ENCODE measurements at regions of chr14 and their contacts with region 1.

Region 1: GRCh38 chr14:75560962-75561432 is 17.4 kb upstream of the FLVCR2 start:
- DNase-seq: peak; percentile 60
- ATAC-seq: peak; percentile 54
- H3K4me3 Mint-ChIP-seq: no peak overlapping the region
- H3K27ac Mint-ChIP-seq: no peak overlapping the region
- H3K4me1 Mint-ChIP-seq: peaks cover 54% of the 10 kb centered on the region
- H3K27me3 Mint-ChIP-seq: no peaks in the 10 kb centered on the region

Region 2: GRCh38 chr14:75497191-75497590 is 63.8 kb before region 1 on chr14:
- CTCF ChIA-PET with region 1: interaction called, 23 read pairs
- POLR2A ChIA-PET with region 1: no interaction called
- DNase-seq: peak; percentile 53
- ATAC-seq: peak; percentile 88
- H3K4me3 Mint-ChIP-seq: no peak overlapping the region
- H3K27ac Mint-ChIP-seq: peak overlapping the region; percentile 75
- H3K4me1 Mint-ChIP-seq: peaks cover 53% of the 10 kb centered on the region
- H3K27me3 Mint-ChIP-seq: no peaks in the 10 kb centered on the region

Region 3: DNA sequence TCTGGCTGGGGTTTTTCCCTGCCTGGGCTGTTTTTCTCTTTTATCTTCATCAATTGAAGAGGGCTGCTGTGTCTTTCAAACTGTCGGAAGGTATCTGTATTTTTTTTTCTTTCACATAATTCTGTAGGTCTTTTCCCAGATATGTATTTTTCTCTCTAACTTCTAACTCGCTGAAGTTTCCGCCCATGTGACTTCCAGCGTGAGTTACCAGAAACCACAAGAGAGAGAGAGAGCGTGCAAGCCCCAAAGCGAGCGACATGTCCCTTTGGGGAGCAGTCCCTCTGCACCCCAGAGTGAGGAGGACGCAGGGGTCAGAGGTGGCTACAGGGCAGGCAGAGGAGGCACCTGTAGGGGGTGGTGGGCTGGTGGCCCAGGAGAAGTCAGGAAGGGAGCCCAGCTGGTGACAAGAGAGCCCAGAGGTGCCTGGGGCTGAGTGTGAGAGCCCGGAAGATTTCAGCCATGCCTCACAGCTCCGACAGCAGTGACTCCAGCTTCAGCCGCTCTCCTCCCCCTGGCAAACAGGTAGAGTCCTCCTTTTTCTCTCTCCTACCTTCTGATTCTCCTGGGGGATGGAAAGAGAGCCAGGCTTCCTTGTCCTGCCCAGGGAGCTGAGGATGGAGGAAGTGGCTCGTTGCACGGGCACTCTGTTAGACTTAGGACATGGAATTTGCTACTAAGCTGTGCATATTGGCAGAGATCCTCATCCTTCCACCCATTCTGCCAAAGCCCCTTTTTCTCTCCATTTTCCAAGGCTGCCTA is 38.6 kb before region 1 on chr14 and contains the start of gene BATF:
- CTCF ChIA-PET with region 1: interaction called, 58 read pairs
- POLR2A ChIA-PET with region 1: interaction called, 8 read pairs
- DNase-seq: peak; percentile 87
- ATAC-seq: peak; percentile 84
- H3K4me3 Mint-ChIP-seq: peak within 1 kb of the TSS; percentile 100
- H3K27ac Mint-ChIP-seq: peak within 1 kb of the TSS; percentile 99
- H3K4me1 Mint-ChIP-seq: peaks cover 63% of the 10 kb centered on the region
- H3K27me3 Mint-ChIP-seq: no peaks in the 10 kb centered on the region
- total RNA-seq, gene BATF: 41.3 to 41.6 TPM

Region 4: DNA sequence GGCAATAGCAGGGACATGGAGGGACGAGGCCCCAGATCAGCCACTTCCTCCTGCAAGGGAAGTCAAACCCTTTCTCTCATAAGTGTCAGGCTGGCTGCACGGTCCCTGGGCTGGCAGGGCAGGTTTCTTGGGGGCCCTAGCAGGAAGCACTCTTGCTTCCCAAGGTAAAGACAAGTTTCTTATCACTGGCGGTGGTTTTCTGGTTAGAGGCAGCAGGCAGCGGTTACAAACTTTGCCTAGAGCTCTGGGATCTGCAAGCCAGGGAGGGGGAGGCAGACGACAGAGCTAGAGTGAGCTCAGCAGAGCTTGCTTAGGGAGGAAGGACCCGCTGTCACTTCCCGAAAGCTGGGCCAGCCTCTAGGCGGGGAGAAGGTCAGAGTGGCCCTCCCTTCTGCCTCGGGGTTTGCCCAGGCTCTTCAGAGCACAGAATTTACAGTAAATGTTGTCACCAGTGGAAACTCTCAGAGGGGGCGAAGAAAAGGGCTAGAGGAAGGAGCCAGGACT is 18.4 kb before region 1 on chr14:
- CTCF ChIA-PET with region 1: interaction called, 14 read pairs
- POLR2A ChIA-PET with region 1: interaction called, 6 read pairs
- DNase-seq: peak; percentile 77
- ATAC-seq: peak; percentile 86
- H3K4me3 Mint-ChIP-seq: peak overlapping the region; percentile 48
- H3K27ac Mint-ChIP-seq: peak overlapping the region; percentile 97
- H3K4me1 Mint-ChIP-seq: peaks cover 50% of the 10 kb centered on the region
- H3K27me3 Mint-ChIP-seq: no peaks in the 10 kb centered on the region

Region 5: GRCh38 chr14:75654127-75654732 is 93.2 kb after region 1 on chr14:
- CTCF ChIA-PET with region 1: interaction called, 11 read pairs
- POLR2A ChIA-PET with region 1: no interaction called
- DNase-seq: peak; percentile 87
- ATAC-seq: peak; percentile 88
- H3K4me3 Mint-ChIP-seq: no peak overlapping the region
- H3K27ac Mint-ChIP-seq: no peak overlapping the region
- H3K4me1 Mint-ChIP-seq: peaks cover 9% of the 10 kb centered on the region
- H3K27me3 Mint-ChIP-seq: no peaks in the 10 kb centered on the region